ENCODE measurements at regions of chr22 and their contacts with region 1.

Region 1: GRCh38 chr22:29569011-29569678 is 11.8 kb downstream of the NIPSNAP1 start:
- DNase-seq: no peak
- ATAC-seq: no peak
- H3K4me3 ChIP-seq: no peak overlapping the region
- H3K27ac ChIP-seq: no peak overlapping the region
- H3K4me1 ChIP-seq: no peaks in the 10 kb centered on the region
- H3K27me3 ChIP-seq: no peaks in the 10 kb centered on the region
- CTCF ChIP-seq: no peak

Region 2: GRCh38 chr22:29555065-29555644 is 14.0 kb before region 1 on chr22:
- CTCF ChIA-PET with region 1: no interaction called
- POLR2A ChIA-PET with region 1: no interaction called
- in situ Hi-C with region 1: no loop called
- intact Hi-C with region 1: no loop called
- DNase-seq: no peak
- ATAC-seq: no peak
- H3K4me3 ChIP-seq: no peak overlapping the region
- H3K27ac ChIP-seq: no peak overlapping the region
- H3K4me1 ChIP-seq: peaks cover 8% of the 10 kb centered on the region
- H3K27me3 ChIP-seq: no peaks in the 10 kb centered on the region
- CTCF ChIP-seq: no peak

Region 3: GRCh38 chr22:30005213-30005857 is 436.2 kb after region 1 on chr22:
- CTCF ChIA-PET with region 1: no interaction called
- POLR2A ChIA-PET with region 1: interaction called, 11 read pairs
- in situ Hi-C with region 1: no loop called
- intact Hi-C with region 1: no loop called
- DNase-seq: peak; percentile 46
- ATAC-seq: peak; percentile 87
- H3K4me3 ChIP-seq: no peak overlapping the region
- H3K27ac ChIP-seq: no peak overlapping the region
- H3K4me1 ChIP-seq: no peaks in the 10 kb centered on the region
- H3K27me3 ChIP-seq: no peaks in the 10 kb centered on the region
- CTCF ChIP-seq: peak; percentile 90

Measured in Panc1 (cell line).